ENCODE measurements at regions of chr4 and their contacts with region 1.

Region 1: DNA sequence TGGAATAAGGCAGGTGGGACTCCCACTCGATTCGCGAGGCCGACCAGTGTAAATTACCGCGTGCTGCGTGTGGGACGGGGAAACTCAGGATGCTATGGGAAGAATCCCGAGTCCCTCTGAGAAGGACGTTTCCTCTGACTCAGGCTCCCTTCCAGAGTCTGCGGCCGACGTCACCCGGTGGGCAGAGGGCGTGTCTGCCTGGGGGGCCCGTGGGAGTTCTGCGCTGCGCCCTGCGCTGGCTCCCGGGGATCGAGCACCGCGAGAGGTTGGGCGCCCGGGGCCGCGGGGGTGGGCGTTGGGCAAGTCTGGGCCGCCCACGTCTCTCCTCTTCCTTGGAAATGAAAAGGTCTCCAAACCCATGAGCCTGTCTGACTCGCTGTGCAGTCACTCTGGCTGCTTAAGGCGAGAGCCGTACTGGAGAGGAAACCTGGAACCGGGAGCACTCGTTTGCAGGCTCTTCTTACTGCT is 566 bp downstream of the NIPAL1 start:
- DNase-seq: no peak
- H3K4me3 ChIP-seq: peak overlapping the region; percentile 63
- H3K27ac ChIP-seq: no peak overlapping the region
- H3K27me3 ChIP-seq: peaks cover 8% of the 10 kb centered on the region
- CTCF ChIP-seq: no peak

Region 2: GRCh38 chr4:47135210-47135609 is 881.9 kb before region 1 on chr4:
- CTCF ChIA-PET with region 1: no interaction called
- POLR2A ChIA-PET with region 1: no interaction called
- DNase-seq: no peak
- H3K4me3 ChIP-seq: no peak overlapping the region
- H3K27ac ChIP-seq: no peak overlapping the region
- H3K27me3 ChIP-seq: no peaks in the 10 kb centered on the region
- CTCF ChIP-seq: no peak

Region 3: DNA sequence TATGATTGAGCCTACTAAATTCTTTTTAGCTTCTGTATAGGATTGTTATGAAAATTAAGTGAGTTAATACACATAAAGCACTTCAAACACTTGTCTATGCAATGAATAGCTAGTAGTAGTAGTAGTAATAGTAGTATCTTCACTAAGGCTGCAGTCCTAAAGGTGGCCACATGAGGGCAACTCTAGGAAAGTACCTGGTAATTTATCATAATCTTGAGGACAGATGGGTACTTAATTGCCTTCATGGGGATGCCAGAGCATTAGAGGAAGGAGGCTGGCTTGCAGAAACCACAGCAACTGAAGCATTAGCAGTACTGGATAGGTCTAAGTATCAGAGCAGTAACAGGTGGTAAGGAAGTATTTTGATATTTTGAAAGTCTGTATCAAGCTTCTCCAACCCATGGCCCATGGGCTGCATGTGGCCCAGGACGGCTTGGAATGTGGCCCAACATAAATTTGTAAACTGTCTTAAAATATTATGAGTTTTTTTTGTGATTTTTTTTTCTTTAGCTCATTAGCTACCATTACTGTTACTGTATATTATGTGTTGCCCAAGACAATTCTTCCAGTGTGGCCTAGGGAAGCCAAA is 16.8 kb after region 1 on chr4:
- CTCF ChIA-PET with region 1: interaction called, 10 read pairs
- POLR2A ChIA-PET with region 1: no interaction called
- DNase-seq: no peak
- H3K4me3 ChIP-seq: no peak overlapping the region
- H3K27ac ChIP-seq: no peak overlapping the region
- H3K27me3 ChIP-seq: no peaks in the 10 kb centered on the region
- CTCF ChIP-seq: peak; percentile 50

Region 4: DNA sequence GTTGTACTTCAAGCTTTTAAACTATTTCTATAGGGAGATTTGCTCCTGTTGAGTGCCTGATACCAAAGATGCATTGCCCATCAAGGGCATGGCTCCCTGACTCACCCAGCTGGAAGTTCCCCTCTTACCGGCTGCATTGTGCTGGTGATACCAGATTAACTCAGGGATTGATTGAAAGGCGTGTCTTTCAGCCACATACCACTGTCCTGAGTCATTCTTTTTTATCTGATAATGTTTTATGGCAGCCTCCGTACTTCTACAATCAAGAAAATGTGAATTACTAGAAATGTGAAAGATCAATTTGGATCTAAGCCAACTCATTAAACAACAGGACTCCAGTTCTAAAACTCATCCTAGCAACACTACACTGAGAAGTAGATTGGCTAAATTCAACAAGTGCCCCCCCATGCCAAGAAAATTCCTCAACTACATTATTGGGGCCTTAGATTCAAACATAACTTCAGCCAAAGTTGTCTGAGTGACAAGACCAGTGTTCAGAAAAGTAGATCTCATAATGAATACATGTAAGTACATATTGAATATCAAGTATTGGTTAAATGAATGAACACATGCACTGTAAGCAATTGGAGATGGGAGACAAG is 76.9 kb after region 1 on chr4:
- CTCF ChIA-PET with region 1: no interaction called
- POLR2A ChIA-PET with region 1: no interaction called
- DNase-seq: no peak
- H3K4me3 ChIP-seq: no peak overlapping the region
- H3K27ac ChIP-seq: no peak overlapping the region
- H3K27me3 ChIP-seq: no peaks in the 10 kb centered on the region
- CTCF ChIP-seq: no peak

Measured in AG04450 (cell line).